Stomach (tissue), 19 donors: ENCODE measurements at regions of chr1 and their contacts with region 1.

Region 1: GRCh38 chr1:22275721-22276395 is 133.0 kb upstream of the WNT4 start:
- DNase-seq: peak; percentile 76 to 80
- H3K4me3 ChIP-seq: no peak overlapping the region
- H3K27ac ChIP-seq: no peak overlapping the region
- H3K4me1 ChIP-seq: peaks cover 0 to 7% (median 0%) of the 10 kb centered on the region in 4 donors
- H3K27me3 ChIP-seq: peaks cover 0 to 20% (median 0%) of the 10 kb centered on the region in 3 donors
- CTCF ChIP-seq: peak in 5 of 7 experiments; percentile 63 to 94 (median 82)
- EP300 ChIP-seq: no peak
- POLR2A ChIP-seq: no peak

Region 2: DNA sequence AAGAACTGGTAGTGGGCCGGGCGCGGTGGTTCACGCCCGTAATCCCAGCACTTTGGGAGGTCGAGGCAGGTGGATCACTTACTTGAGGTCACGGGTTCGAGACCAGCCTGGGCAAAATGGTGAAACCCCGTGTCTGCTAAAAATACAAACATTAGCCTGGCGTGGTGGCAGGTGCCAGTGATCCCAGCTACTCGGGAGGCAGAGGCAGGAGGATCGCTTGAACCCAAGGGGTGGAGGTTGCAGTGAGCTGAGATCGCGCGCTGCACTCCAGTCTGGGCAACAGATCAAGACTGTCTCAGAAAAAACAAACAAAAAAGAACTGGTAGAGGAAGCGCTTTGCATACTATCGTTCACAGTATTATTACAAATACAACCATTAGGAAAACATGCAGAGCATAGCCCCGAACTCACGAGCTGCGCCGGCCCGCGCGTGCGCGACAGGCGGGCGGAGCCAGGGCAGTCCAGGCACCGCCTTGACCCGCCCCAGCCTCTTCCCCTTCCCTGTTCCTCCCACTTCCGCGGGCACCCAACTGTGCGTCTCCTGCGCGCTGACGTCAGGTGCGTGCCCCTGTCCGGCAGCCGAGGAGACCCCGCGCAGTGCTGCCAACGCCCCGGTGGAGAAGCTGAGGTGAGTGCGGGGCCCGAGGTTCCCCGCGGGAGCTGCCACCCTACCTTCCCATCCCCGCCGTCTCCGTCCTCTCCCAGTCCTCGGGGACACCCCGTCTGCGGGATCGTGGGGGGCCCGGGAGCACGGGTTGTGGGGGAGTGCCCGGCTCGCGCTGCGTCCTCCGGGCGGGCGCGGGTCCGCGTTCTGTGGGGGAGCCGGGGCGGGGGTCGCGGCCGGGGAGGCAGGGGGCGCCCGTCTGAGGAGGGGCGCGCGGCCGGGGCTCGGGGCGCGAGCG is 223.5 kb before region 1 on chr1 and contains the start of gene CDC42:
- intact Hi-C with region 1: no loop called
- DNase-seq: peak; percentile 98 to 99
- H3K4me3 ChIP-seq: peak within 1 kb of the TSS; percentile 63 to 100 (median 85)
- H3K27ac ChIP-seq: peak within 1 kb of the TSS; percentile 98 to 100 (median 100)
- H3K4me1 ChIP-seq: peaks cover 24 to 45% (median 35%) of the 10 kb centered on the region in 4 donors
- H3K27me3 ChIP-seq: no peaks in the 10 kb centered on the region
- CTCF ChIP-seq: no peak
- EP300 ChIP-seq: no peak
- POLR2A ChIP-seq: peak in 2 of 4 donors; percentile 93 to 98
- total RNA-seq, gene CDC42: 72.4 to 425 (median 80.8) TPM

Region 3: GRCh38 chr1:22131875-22132486 is 143.9 kb before region 1 on chr1:
- intact Hi-C with region 1: loop called (anchors 10 kb)
- DNase-seq: peak; percentile 68 to 83
- H3K4me3 ChIP-seq: no peak overlapping the region
- H3K27ac ChIP-seq: no peak overlapping the region
- H3K4me1 ChIP-seq: peaks cover 5 to 15% (median 13%) of the 10 kb centered on the region in 4 donors
- H3K27me3 ChIP-seq: peaks cover 0 to 4% (median 0%) of the 10 kb centered on the region in 3 donors
- CTCF ChIP-seq: peak in 5 of 7 experiments; percentile 43 to 84 (median 73)
- EP300 ChIP-seq: no peak
- POLR2A ChIP-seq: no peak